Esophagus muscularis mucosa (tissue), 4 donors: ENCODE measurements at regions of chr11 and their contacts with region 1.

Region 1: GRCh38 chr11:44286268-44286880 is 23.6 kb downstream of the ALX4 start:
- DNase-seq: no peak
- H3K4me3 ChIP-seq: no peak overlapping the region
- H3K27ac ChIP-seq: no peak overlapping the region
- H3K4me1 ChIP-seq: no peaks in the 10 kb centered on the region
- H3K27me3 ChIP-seq: peaks cover 0 to 7% (median 0%) of the 10 kb centered on the region in 4 donors
- CTCF ChIP-seq: peak; percentile 84 to 96 (median 90)
- EP300 ChIP-seq: no peak
- POLR2A ChIP-seq: no peak

Region 2: GRCh38 chr11:44538375-44539054 is 252.1 kb after region 1 on chr11:
- intact Hi-C with region 1: loop called (anchors 1 kb)
- DNase-seq: no peak
- H3K4me3 ChIP-seq: no peak overlapping the region
- H3K27ac ChIP-seq: no peak overlapping the region
- H3K4me1 ChIP-seq: peaks cover 0 to 6% (median 5%) of the 10 kb centered on the region in 4 donors
- H3K27me3 ChIP-seq: peaks cover 0 to 14% (median 0%) of the 10 kb centered on the region in 4 donors
- CTCF ChIP-seq: peak; percentile 93 to 96 (median 95)
- EP300 ChIP-seq: no peak
- POLR2A ChIP-seq: no peak